ENCODE measurements at regions of chr2 and their contacts with region 1.

Region 1: GRCh38 chr2:225041851-225042799 is at the start of gene DOCK10:
- DNase-seq: no peak
- ATAC-seq: peak; percentile 36
- H3K4me3 ChIP-seq: peak within 1 kb of the TSS; percentile 92
- H3K27ac ChIP-seq: peak within 1 kb of the TSS; percentile 98
- H3K4me1 ChIP-seq: peaks cover 13% of the 10 kb centered on the region
- H3K27me3 ChIP-seq: no peaks in the 10 kb centered on the region
- CTCF ChIP-seq: no peak
- EP300 ChIP-seq: no peak
- POLR2A ChIP-seq: peak; percentile 65
- RAD21 ChIP-seq: no peak
- polyA plus RNA-seq, gene DOCK10: 16.9 to 17.8 TPM

Region 2: GRCh38 chr2:224666951-224667553 is 375.1 kb before region 1 on chr2:
- CTCF ChIA-PET with region 1: no interaction called
- POLR2A ChIA-PET with region 1: no interaction called
- RAD21 ChIA-PET with region 1: no interaction called
- SMC1A ChIA-PET with region 1: no interaction called
- in situ Hi-C with region 1: no loop called
- intact Hi-C with region 1: loop called (anchors 10 kb)
- DNase-seq: peak; percentile 92
- ATAC-seq: peak; percentile 97
- H3K4me3 ChIP-seq: 0 out of 2 replicates have a peak overlapping the region, but pooled peaks have one; percentile 10
- H3K27ac ChIP-seq: peak overlapping the region; percentile 48
- H3K4me1 ChIP-seq: peaks cover 3% of the 10 kb centered on the region
- H3K27me3 ChIP-seq: no peaks in the 10 kb centered on the region
- CTCF ChIP-seq: no peak
- EP300 ChIP-seq: peak; percentile 96 to 97
- POLR2A ChIP-seq: no peak
- RAD21 ChIP-seq: no peak

Region 3: DNA sequence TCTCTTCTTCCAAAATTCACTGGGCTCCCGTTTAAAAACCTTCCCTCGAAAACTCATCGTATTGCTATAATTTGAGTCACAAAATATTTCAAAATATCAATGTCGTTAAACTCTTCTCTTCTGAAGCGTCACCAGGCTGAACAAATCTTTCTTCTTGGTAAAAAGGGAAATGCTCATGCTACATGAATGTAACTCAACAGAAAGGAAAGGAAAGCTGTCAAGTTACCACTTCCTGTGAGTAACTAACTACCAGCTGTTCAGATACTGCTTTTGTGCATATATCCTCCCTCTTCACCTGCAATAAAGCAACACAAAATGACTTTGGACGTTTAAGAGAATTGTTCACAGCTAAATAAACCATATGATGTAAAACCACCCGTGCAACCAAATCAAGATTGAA is 95.2 kb before region 1 on chr2:
- CTCF ChIA-PET with region 1: interaction called, 4 read pairs
- POLR2A ChIA-PET with region 1: interaction called, 8 read pairs
- RAD21 ChIA-PET with region 1: interaction called, 15 read pairs
- SMC1A ChIA-PET with region 1: interaction called, 30 read pairs
- in situ Hi-C with region 1: no loop called
- intact Hi-C with region 1: no loop called
- DNase-seq: no peak
- ATAC-seq: peak; percentile 54
- H3K4me3 ChIP-seq: peak overlapping the region; percentile 78
- H3K27ac ChIP-seq: peak overlapping the region; percentile 86
- H3K4me1 ChIP-seq: peaks cover 49% of the 10 kb centered on the region
- H3K27me3 ChIP-seq: no peaks in the 10 kb centered on the region
- CTCF ChIP-seq: no peak
- EP300 ChIP-seq: peak in 1 of 2 experiments; percentile 52; a peak in 1 of 4 replicates
- POLR2A ChIP-seq: no peak
- RAD21 ChIP-seq: no peak

Region 4: GRCh38 chr2:225052703-225053102 is 10.6 kb after region 1 on chr2:
- CTCF ChIA-PET with region 1: interaction called, 5 read pairs
- POLR2A ChIA-PET with region 1: interaction called, 3 read pairs
- RAD21 ChIA-PET with region 1: interaction called, 17 read pairs
- SMC1A ChIA-PET with region 1: interaction called, 14 read pairs
- in situ Hi-C with region 1: no loop called
- intact Hi-C with region 1: no loop called
- DNase-seq: no peak
- ATAC-seq: peak; percentile 88
- H3K4me3 ChIP-seq: no peak overlapping the region
- H3K27ac ChIP-seq: no peak overlapping the region
- H3K4me1 ChIP-seq: no peaks in the 10 kb centered on the region; the same call in 1 of the 2 replicates
- H3K27me3 ChIP-seq: no peaks in the 10 kb centered on the region
- CTCF ChIP-seq: no peak
- EP300 ChIP-seq: no peak
- POLR2A ChIP-seq: no peak
- RAD21 ChIP-seq: no peak

Region 5: GRCh38 chr2:225100856-225101294 is 58.8 kb after region 1 on chr2:
- CTCF ChIA-PET with region 1: no interaction called
- POLR2A ChIA-PET with region 1: no interaction called
- RAD21 ChIA-PET with region 1: no interaction called
- SMC1A ChIA-PET with region 1: no interaction called
- in situ Hi-C with region 1: no loop called
- intact Hi-C with region 1: no loop called
- DNase-seq: no peak
- ATAC-seq: no peak
- H3K4me3 ChIP-seq: no peak overlapping the region
- H3K27ac ChIP-seq: no peak overlapping the region
- H3K4me1 ChIP-seq: no peaks in the 10 kb centered on the region
- H3K27me3 ChIP-seq: no peaks in the 10 kb centered on the region
- CTCF ChIP-seq: no peak
- EP300 ChIP-seq: no peak
- POLR2A ChIP-seq: no peak
- RAD21 ChIP-seq: no peak

Region 6: DNA sequence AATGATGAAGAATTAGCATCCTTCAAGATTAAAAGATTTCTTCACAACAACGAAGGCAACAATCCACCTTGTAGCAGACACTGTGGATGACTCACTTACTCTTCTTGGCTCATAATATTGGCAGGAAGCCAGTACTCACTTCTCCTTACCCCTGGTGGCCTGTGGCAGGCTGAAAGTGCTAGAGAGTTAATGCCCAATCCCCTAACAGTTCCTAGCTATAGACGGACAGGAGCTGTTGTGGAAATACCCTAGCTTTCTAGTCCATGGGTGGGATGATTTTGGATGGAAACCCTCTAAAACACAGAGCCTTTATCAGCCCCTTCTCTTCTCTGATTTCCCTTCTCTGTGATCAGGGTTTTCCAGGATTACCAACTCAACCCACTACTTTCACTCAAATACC is 228.7 kb after region 1 on chr2:
- CTCF ChIA-PET with region 1: interaction called, 3 read pairs
- POLR2A ChIA-PET with region 1: interaction called, 3 read pairs
- RAD21 ChIA-PET with region 1: interaction called, 4 read pairs
- SMC1A ChIA-PET with region 1: interaction called, 5 read pairs
- in situ Hi-C with region 1: loop called (anchors 10 kb)
- intact Hi-C with region 1: loop called (anchors 2 kb)
- DNase-seq: peak; percentile 82
- ATAC-seq: peak; percentile 97
- H3K4me3 ChIP-seq: no peak overlapping the region; the same call in 1 of the 2 replicates
- H3K27ac ChIP-seq: peak overlapping the region; percentile 42; the same call in 1 of the 2 replicates
- H3K4me1 ChIP-seq: peaks cover 23% of the 10 kb centered on the region
- H3K27me3 ChIP-seq: no peaks in the 10 kb centered on the region
- CTCF ChIP-seq: peak in 1 of 3 experiments; percentile 8; a peak in 1 of 6 replicates
- EP300 ChIP-seq: peak in 1 of 2 experiments; percentile 91; a peak in 2 of 4 replicates
- POLR2A ChIP-seq: no peak
- RAD21 ChIP-seq: no peak